Activated T-helper 1 cell treated with anti-CD3 and anti-CD28 coated beads, Interleukin-12 subunit alpha, Interleukin-12 subunit beta, Interleukin-2, Interleukin-4 antibody, amounts not matched to agents 30 ng/mL and 10 ng/mL and 1 ng/mL, durations not matched to agents 14 hours and 24 hours and 36 hours (primary cell): ENCODE measurements at regions of chr1 and their contacts with region 1.

Region 1: DNA sequence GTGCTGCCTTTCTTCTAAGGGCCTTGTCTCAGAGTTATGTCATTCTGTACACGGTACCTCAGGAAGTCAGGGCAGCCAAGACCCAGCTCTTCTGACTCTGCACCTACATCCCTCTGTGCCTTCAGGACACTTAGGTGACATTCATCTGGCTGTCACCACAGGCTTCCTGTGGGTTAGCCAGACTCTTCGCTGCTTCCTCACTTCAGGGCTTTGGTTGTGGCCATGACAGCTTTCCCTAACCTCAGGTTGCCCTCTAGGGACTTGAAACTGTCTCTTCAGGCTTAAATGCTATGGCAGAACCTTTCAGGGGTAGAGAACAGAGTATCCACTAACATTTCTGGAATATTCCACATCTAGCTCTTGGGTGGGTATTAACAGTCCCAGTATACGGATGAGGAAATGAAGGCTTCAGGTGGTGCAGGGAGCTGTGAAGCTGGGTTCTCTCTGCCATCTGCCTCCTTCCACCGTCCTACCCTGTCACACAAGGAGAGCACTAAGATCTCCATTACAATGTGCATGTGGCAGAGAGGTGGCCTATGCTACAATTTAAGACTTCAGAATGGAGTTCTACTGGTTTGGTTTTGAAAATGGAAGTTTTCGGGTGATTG is 9.9 kb downstream of the TSSK3 start:
- DNase-seq: peak; percentile 66
- H3K4me3 Mint-ChIP-seq: no peak overlapping the region
- H3K27ac Mint-ChIP-seq: no peak overlapping the region
- H3K4me1 Mint-ChIP-seq: peaks cover 21% of the 10 kb centered on the region
- H3K27me3 Mint-ChIP-seq: no peaks in the 10 kb centered on the region

Region 2: GRCh38 chr1:31891280-31891679 is 481.0 kb before region 1 on chr1:
- intact Hi-C with region 1: no loop called
- DNase-seq: peak; percentile 34
- H3K4me3 Mint-ChIP-seq: peak overlapping the region; percentile 29
- H3K27ac Mint-ChIP-seq: peak overlapping the region; percentile 54
- H3K4me1 Mint-ChIP-seq: peaks cover 38% of the 10 kb centered on the region
- H3K27me3 Mint-ChIP-seq: no peaks in the 10 kb centered on the region

Region 3: GRCh38 chr1:32215629-32216480 is 156.4 kb before region 1 on chr1:
- intact Hi-C with region 1: loop called (anchors 1 kb)
- DNase-seq: peak; percentile 35
- H3K4me3 Mint-ChIP-seq: no peak overlapping the region
- H3K27ac Mint-ChIP-seq: no peak overlapping the region
- H3K4me1 Mint-ChIP-seq: peaks cover 17% of the 10 kb centered on the region
- H3K27me3 Mint-ChIP-seq: no peaks in the 10 kb centered on the region

Region 4: GRCh38 chr1:32321712-32322291 is 50.5 kb before region 1 on chr1:
- intact Hi-C with region 1: loop called (anchors 5 kb)
- DNase-seq: no peak
- H3K4me3 Mint-ChIP-seq: peak overlapping the region; percentile 53
- H3K27ac Mint-ChIP-seq: peak overlapping the region; percentile 83
- H3K4me1 Mint-ChIP-seq: peaks cover 49% of the 10 kb centered on the region
- H3K27me3 Mint-ChIP-seq: no peaks in the 10 kb centered on the region